Heart left ventricle (tissue), 16 donors: ENCODE measurements at regions of chr1 and their contacts with region 1.

Region 1: DNA sequence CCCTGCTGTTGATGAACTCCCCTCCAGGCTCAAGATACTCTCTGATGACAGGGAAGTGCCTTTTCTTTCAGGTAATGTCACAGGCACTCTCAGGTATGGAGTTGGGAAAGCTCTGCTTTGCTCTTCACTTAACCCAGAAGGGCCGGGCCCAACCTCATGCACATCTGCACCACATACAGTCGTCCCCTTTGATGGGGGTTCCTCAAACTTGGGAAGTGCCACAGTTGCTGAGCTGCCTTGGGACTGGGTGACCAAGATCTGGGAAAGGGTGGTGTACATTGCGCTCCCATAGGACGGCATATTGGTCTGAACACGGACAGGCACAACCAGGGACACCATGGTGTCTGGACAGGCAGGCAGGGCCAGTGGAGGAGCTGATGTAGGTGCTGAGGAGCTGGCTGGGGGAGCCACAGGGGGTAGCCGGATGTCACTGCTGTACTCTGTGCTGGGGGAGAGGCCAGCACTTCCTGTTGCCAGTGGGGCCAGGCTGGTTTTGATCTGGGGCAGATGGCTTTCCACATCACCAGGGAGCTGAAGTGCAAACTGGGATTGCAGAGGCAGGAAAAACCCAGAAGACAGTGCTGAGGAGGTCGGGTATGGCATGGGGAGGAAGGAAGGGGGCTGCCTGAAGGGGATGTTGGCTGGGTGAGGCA is 96.2 kb upstream of the EDN2 start:
- DNase-seq: no peak
- ATAC-seq: no peak
- H3K4me3 ChIP-seq: no peak overlapping the region
- H3K27ac ChIP-seq: no peak overlapping the region
- H3K4me1 ChIP-seq: no peaks in the 10 kb centered on the region
- H3K27me3 ChIP-seq: no peaks in the 10 kb centered on the region
- CTCF ChIP-seq: no peak
- POLR2A ChIP-seq: no peak

Region 2: DNA sequence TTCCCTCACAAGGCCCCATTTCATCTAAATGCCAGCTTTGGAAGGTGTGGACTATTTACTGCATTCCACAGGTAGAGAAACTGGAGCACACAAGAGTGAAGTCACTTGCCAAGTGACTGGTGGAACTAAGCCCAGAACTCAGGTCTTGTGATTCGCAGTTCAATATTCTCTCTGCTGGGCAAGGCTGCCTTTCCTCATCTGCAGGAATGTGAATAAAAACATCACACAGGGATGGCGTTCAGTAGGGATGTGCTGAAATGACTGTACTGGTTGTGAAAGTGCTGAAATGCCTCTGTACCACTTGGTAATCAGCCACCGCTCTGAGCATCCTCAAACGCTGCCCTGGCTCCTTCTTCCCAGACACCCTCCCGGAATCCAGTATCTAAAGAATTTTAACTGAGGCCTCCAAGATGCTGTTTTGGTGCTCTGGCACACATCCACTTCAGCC is 192.5 kb after region 1 on chr1:
- intact Hi-C with region 1: loop called in 2 of 10 experiments (anchors 5 to 10 kb)
- DNase-seq: no peak
- ATAC-seq: peak in 1 of 4 donors; percentile 25
- H3K4me3 ChIP-seq: no peak overlapping the region
- H3K27ac ChIP-seq: no peak overlapping the region
- H3K4me1 ChIP-seq: peaks cover 0 to 39% (median 7%) of the 10 kb centered on the region in 12 donors
- H3K27me3 ChIP-seq: no peaks in the 10 kb centered on the region
- CTCF ChIP-seq: no peak
- POLR2A ChIP-seq: no peak